ENCODE measurements at regions of chrX and their contacts with region 1.

Region 1: GRCh38 chrX:54044126-54044876 is at the start of gene PHF8:
- DNase-seq: peak; percentile 96
- ATAC-seq: peak; percentile 91
- H3K4me3 Mint-ChIP-seq: peak within 1 kb of the TSS; percentile 95
- H3K27ac Mint-ChIP-seq: peak within 1 kb of the TSS; percentile 95
- H3K4me1 Mint-ChIP-seq: peaks cover 24% of the 10 kb centered on the region
- H3K27me3 Mint-ChIP-seq: no peaks in the 10 kb centered on the region
- total RNA-seq, gene PHF8: 47.4 to 47.8 TPM

Region 2: DNA sequence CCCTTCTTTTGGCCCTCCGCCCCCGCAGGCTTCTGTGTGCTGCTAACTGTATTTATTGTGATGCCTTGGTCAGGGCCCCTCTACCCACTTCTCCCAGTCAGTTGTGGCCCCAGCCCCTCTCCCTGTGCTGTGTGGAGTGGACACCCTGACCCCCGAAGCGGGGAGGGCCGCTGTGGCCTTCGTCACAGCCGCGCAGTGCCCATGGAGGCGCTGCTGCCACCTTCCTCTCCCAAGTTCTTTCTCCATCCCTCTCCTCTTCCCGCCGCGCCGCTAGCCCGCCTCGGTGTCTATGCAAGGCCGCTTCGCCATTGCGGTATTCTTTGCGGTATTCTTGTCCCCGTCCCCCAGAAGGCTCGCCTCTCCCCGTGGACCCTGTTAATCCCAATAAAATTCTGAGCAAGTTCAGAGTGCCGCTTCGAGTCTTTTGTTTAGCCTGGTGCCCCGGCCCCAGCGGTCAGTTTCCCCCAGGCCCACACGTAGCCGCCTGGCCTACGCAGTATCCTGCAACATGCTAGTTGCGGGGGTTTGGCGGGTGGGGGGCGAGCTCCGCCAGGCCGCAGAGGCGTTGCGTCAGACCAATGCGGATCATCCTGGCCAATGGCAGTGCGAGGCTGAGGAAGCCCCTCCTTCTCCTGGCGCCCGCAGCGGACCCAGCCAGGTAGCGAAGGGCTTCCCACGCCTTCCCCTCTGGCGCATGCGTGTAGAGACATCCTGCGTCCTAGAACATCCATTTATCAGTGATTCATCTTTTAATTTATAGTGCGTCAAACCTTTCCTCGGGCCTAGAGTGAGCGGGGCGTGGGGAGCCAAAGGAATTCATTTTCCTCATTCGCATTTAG is 955.9 kb before region 1 on chrX:
- CTCF ChIA-PET with region 1: no interaction called
- POLR2A ChIA-PET with region 1: no interaction called
- intact Hi-C with region 1: loop called in 1 of 2 experiments (anchors 2 kb)
- DNase-seq: peak; percentile 89
- ATAC-seq: peak; percentile 77
- H3K4me3 Mint-ChIP-seq: peak overlapping the region; percentile 76
- H3K27ac Mint-ChIP-seq: peak overlapping the region; percentile 87
- H3K4me1 Mint-ChIP-seq: peaks cover 61% of the 10 kb centered on the region
- H3K27me3 Mint-ChIP-seq: no peaks in the 10 kb centered on the region

Region 3: DNA sequence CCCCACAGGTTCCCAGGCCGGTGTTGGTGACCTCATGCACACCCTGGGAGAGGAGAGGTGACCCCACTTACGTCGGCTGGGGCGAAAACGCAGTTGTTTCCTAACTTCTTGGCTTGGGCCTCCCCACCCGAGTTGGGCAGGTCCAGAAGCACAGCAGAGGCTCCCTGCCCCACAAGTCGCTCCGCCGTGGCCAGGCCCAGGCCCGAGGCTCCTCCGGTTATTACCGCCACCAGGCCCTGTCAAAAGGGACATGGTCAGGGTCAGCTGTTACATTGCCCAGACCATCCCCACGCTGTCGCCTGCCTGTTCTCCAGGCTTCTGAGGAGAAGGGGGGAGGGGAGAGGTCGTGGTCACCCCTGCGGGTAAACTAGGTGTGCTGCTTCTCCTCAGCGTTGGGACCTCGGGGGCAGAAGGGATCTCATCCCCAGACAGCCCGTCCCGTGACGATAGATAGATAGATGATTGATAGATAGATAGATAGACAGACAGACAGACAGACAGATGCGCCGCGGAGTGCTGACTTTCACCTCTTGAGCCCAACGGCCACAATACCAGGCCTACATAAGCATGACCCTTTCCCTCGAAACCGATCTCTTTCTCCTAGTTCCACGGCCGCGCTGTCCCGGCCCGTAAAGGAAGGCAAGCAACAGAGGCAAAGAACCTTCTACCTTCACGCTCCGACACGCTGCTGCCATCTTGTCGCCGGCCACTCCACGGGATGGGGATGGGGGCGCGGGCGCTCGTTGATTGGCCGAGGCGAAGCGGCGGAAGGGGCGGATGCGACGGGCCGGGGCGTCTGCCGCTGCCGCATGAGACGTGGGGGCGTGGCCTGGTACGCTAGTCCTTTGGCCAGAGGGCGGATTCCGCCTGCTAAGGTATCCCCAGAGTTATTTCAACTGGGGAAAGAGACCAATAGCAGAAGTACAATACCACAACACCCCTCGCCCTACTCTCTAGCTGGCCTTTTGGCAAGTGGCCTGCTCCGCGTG is 610.4 kb before region 1 on chrX and contains the start of gene HSD17B10:
- CTCF ChIA-PET with region 1: no interaction called
- POLR2A ChIA-PET with region 1: no interaction called
- intact Hi-C with region 1: loop called in 1 of 2 experiments (anchors 1 kb)
- DNase-seq: peak; percentile 93
- ATAC-seq: peak; percentile 95
- H3K4me3 Mint-ChIP-seq: peak within 1 kb of the TSS; percentile 98
- H3K27ac Mint-ChIP-seq: peak within 1 kb of the TSS; percentile 92
- H3K4me1 Mint-ChIP-seq: peaks cover 27% of the 10 kb centered on the region
- H3K27me3 Mint-ChIP-seq: peaks cover 2% of the 10 kb centered on the region
- total RNA-seq, gene HSD17B10: 89.0 to 92.7 TPM

Region 4: GRCh38 chrX:54182864-54183608 is 138.7 kb after region 1 on chrX and contains the start of gene FAM120C:
- CTCF ChIA-PET with region 1: no interaction called
- POLR2A ChIA-PET with region 1: interaction called, 6 read pairs
- intact Hi-C with region 1: loop called (anchors 1 kb)
- DNase-seq: peak; percentile 80
- ATAC-seq: peak; percentile 73
- H3K4me3 Mint-ChIP-seq: peak within 1 kb of the TSS; percentile 81
- H3K27ac Mint-ChIP-seq: peak within 1 kb of the TSS; percentile 87
- H3K4me1 Mint-ChIP-seq: peaks cover 39% of the 10 kb centered on the region
- H3K27me3 Mint-ChIP-seq: no peaks in the 10 kb centered on the region
- total RNA-seq, gene FAM120C: 6.6 to 8.3 TPM

Region 5: GRCh38 chrX:54288277-54288676 is 244.0 kb after region 1 on chrX:
- CTCF ChIA-PET with region 1: no interaction called
- POLR2A ChIA-PET with region 1: no interaction called
- intact Hi-C with region 1: no loop called
- DNase-seq: no peak
- ATAC-seq: no peak
- H3K4me3 Mint-ChIP-seq: no peak overlapping the region
- H3K27ac Mint-ChIP-seq: no peak overlapping the region
- H3K4me1 Mint-ChIP-seq: no peaks in the 10 kb centered on the region
- H3K27me3 Mint-ChIP-seq: no peaks in the 10 kb centered on the region

Region 6: GRCh38 chrX:54639346-54640102 is 595.2 kb after region 1 on chrX:
- CTCF ChIA-PET with region 1: no interaction called
- POLR2A ChIA-PET with region 1: interaction called, 12 read pairs
- intact Hi-C with region 1: loop called (anchors 1 to 5 kb)
- DNase-seq: peak; percentile 96
- ATAC-seq: peak; percentile 93
- H3K4me3 Mint-ChIP-seq: peak overlapping the region; percentile 84
- H3K27ac Mint-ChIP-seq: peak overlapping the region; percentile 92
- H3K4me1 Mint-ChIP-seq: peaks cover 6% of the 10 kb centered on the region
- H3K27me3 Mint-ChIP-seq: no peaks in the 10 kb centered on the region

Region 7: GRCh38 chrX:55160685-55161552 is 1116.6 kb after region 1 on chrX:
- CTCF ChIA-PET with region 1: no interaction called
- POLR2A ChIA-PET with region 1: no interaction called
- intact Hi-C with region 1: loop called in 1 of 2 experiments (anchors 5 kb)
- DNase-seq: peak; percentile 93
- ATAC-seq: peak; percentile 96
- H3K4me3 Mint-ChIP-seq: peak overlapping the region; percentile 79
- H3K27ac Mint-ChIP-seq: peak overlapping the region; percentile 89
- H3K4me1 Mint-ChIP-seq: peaks cover 10% of the 10 kb centered on the region
- H3K27me3 Mint-ChIP-seq: no peaks in the 10 kb centered on the region

Measured in activated CD4-positive, alpha-beta T cell treated with anti-CD3 and anti-CD28 coated beads for 36 hours (primary cell).